Mammary epithelial cell (primary cell): ENCODE measurements at regions of chr12 and their contacts with region 1.

Region 1: GRCh38 chr12:121858662-121859572 is at the start of gene HPD:
- DNase-seq: peak; percentile 62
- H3K4me3 ChIP-seq: no peak within 1 kb of the TSS
- H3K27ac ChIP-seq: peak within 1 kb of the TSS; percentile 24
- H3K4me1 ChIP-seq: peaks cover 13% of the 10 kb centered on the region
- H3K27me3 ChIP-seq: no peaks in the 10 kb centered on the region
- CTCF ChIP-seq: no peak
- total RNA-seq, gene HPD: 0.17 TPM in 1 of 2 donors, not detected in the other

Region 2: DNA sequence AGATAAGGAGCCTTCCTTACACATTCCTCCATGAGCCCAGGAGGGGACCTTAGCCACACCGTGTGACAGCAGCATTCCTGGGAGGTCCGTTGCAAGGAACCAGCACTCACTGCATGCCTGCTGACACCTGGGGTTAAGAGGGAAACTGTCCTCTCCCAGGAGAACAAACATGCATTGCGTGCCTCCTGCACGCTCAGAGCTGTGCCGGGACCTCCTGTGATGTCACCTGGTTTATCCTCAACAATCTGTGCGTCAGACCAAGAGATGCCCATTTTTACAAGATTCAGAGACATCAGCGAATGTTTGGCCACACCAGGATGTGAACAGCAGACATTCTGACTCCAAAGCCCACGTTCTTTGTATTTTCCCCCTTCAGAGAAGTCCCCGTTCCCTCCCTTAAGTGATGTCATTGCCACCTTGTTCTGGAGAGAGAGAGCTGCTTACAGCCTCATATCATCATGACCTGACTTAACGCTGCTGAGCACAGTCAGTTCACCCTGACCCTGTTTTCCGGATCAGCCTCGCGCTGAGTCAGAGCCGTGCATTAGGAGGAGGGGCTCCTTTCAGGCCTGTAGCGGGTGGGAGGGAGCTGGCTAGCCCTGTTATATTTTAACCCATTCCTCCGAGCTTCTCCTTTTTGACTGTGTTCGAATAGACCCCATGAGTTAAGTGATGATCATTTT is 110.2 kb before region 1 on chr12:
- CTCF ChIA-PET with region 1: no interaction called
- dilution Hi-C with region 1: no loop called
- in situ Hi-C with region 1: no loop called
- intact Hi-C with region 1: no loop called
- DNase-seq: no peak
- H3K4me3 ChIP-seq: no peak overlapping the region
- H3K27ac ChIP-seq: no peak overlapping the region
- H3K4me1 ChIP-seq: no peaks in the 10 kb centered on the region
- H3K27me3 ChIP-seq: no peaks in the 10 kb centered on the region
- CTCF ChIP-seq: no peak

Region 3: DNA sequence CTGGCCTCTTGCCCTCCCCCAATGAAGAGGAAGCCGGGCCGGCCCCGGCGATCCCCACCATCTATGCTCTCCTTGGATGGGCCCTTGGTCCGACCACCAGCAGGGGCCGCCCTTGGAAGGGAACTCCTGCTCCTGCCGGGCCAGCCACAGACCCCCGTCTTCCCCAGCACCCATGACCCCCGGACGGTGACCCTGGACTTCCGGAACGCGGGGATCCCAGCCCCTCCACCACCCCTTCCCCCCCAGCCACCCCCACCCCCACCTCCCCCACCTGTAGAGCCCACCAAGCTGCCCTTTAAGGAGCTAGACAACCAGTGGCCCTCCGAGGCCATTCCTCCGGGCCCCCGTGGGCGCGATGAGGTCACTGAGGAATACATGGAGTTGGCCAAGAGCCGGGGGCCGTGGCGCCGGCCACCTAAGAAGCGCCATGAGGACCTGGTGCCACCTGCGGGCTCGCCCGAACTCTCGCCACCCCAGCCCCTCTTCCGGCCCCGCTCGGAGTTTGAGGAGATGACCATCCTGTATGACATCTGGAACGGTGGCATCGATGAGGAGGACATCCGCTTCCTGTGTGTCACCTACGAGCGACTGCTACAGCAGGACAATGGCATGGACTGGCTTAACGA is 35.7 kb before region 1 on chr12:
- CTCF ChIA-PET with region 1: no interaction called
- dilution Hi-C with region 1: loop called (anchors 5 kb)
- in situ Hi-C with region 1: no loop called
- intact Hi-C with region 1: no loop called
- DNase-seq: no peak
- H3K4me3 ChIP-seq: no peak overlapping the region
- H3K27ac ChIP-seq: no peak overlapping the region
- H3K4me1 ChIP-seq: no peaks in the 10 kb centered on the region
- H3K27me3 ChIP-seq: no peaks in the 10 kb centered on the region
- CTCF ChIP-seq: peak in 1 of 2 donors; percentile 5

Region 4: DNA sequence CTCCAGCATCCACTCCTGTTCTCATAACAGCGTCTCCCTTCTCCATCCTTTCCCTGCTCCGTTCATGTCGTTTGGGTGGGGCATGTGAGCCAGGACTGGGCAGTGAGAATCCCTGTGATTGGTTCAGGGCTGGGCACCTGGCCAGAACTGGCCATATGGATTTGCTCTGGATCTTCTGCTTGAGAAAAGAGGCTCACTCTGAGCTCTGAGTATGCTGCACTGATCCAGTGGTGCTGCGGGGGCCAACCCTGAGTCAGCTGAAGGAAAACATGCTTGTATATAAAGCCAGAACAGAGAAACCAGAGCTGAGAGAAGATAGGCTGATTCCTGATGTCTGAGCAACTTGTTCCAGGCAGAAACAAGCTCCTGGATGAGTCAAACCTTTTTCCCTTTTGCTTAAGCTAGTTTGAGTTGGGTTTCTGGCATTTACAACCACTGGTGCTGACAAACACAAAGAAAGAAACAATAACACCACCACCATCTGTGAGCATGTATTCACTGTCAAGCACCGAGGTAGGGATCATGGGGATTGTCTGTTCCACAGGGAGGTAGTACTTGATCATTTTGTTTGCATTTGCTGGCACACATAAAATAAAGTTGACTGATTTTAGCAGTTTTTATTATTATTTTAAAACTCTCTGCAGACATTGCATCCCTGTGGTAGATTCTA is 13.8 kb after region 1 on chr12:
- CTCF ChIA-PET with region 1: no interaction called
- dilution Hi-C with region 1: no loop called
- in situ Hi-C with region 1: no loop called
- intact Hi-C with region 1: loop called (anchors 2 kb)
- DNase-seq: peak; percentile 91
- H3K4me3 ChIP-seq: no peak overlapping the region
- H3K27ac ChIP-seq: no peak overlapping the region
- H3K4me1 ChIP-seq: peaks cover 5% of the 10 kb centered on the region
- H3K27me3 ChIP-seq: no peaks in the 10 kb centered on the region
- CTCF ChIP-seq: no peak